Activated CD4-positive, alpha-beta T cell treated with anti-CD3 and anti-CD28 coated beads for 36 hours (primary cell): ENCODE measurements at regions of chr21 and their contacts with region 1.

Region 1: GRCh38 chr21:34630536-34631143 is 15.7 kb upstream of the RCAN1 start:
- DNase-seq: peak; percentile 31
- ATAC-seq: peak; percentile 70
- H3K4me3 Mint-ChIP-seq: no peak overlapping the region
- H3K27ac Mint-ChIP-seq: no peak overlapping the region
- H3K4me1 Mint-ChIP-seq: no peaks in the 10 kb centered on the region
- H3K27me3 Mint-ChIP-seq: peaks cover 9% of the 10 kb centered on the region

Region 2: DNA sequence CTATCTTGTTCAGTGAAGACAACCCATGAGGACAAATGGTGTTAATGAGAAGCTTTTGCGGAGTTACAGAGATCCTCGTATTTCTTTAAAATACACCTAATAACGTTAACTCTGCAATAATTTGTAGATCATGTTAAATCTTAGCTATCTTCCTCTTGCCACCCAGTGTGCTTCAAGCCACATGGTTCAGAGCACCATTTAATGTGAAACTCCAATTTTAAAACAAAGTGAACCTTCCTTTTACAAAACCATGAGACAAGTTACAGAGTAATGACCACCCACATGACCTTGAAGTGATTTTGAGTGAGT is 268.6 kb before region 1 on chr21:
- CTCF ChIA-PET with region 1: interaction called, 17 read pairs
- POLR2A ChIA-PET with region 1: no interaction called
- intact Hi-C with region 1: loop called (anchors 1 kb)
- DNase-seq: no peak
- ATAC-seq: no peak
- H3K4me3 Mint-ChIP-seq: no peak overlapping the region
- H3K27ac Mint-ChIP-seq: no peak overlapping the region
- H3K4me1 Mint-ChIP-seq: peaks cover 6% of the 10 kb centered on the region
- H3K27me3 Mint-ChIP-seq: peaks cover 8% of the 10 kb centered on the region

Region 3: GRCh38 chr21:34367321-34367935 is 263.2 kb before region 1 on chr21:
- CTCF ChIA-PET with region 1: interaction called, 17 read pairs
- POLR2A ChIA-PET with region 1: no interaction called
- intact Hi-C with region 1: loop called in 1 of 2 experiments (anchors 1 kb)
- DNase-seq: peak; percentile 61
- ATAC-seq: peak; percentile 49
- H3K4me3 Mint-ChIP-seq: no peak overlapping the region
- H3K27ac Mint-ChIP-seq: no peak overlapping the region
- H3K4me1 Mint-ChIP-seq: no peaks in the 10 kb centered on the region
- H3K27me3 Mint-ChIP-seq: peaks cover 5% of the 10 kb centered on the region

Region 4: GRCh38 chr21:34510148-34511142 is 120.2 kb before region 1 on chr21:
- CTCF ChIA-PET with region 1: interaction called, 10 read pairs
- POLR2A ChIA-PET with region 1: no interaction called
- intact Hi-C with region 1: loop called in 1 of 2 experiments (anchors 1 kb)
- DNase-seq: peak; percentile 83
- ATAC-seq: peak; percentile 93
- H3K4me3 Mint-ChIP-seq: no peak overlapping the region
- H3K27ac Mint-ChIP-seq: no peak overlapping the region
- H3K4me1 Mint-ChIP-seq: no peaks in the 10 kb centered on the region
- H3K27me3 Mint-ChIP-seq: peaks cover 1% of the 10 kb centered on the region

Region 5: DNA sequence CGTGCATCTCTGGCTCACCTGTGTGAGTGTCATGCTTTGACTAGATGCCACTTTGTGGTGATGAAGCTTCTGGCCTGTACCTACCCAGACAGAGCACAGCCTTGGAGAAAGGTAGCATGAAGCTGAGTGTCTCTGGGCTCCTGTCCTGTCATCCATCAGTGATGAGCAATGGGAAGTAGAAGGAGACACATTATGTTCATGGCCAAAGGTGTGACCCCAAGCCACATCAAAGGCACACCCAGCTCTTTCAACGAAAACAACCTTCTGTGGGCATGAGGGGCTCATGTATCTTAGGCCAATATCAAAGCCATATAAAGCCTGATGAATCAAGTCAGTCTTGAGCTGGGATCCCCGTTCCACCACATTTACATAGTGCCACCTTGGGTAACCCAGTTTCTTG is 37.1 kb after region 1 on chr21:
- CTCF ChIA-PET with region 1: interaction called, 10 read pairs
- POLR2A ChIA-PET with region 1: no interaction called
- intact Hi-C with region 1: no loop called
- DNase-seq: no peak
- ATAC-seq: no peak
- H3K4me3 Mint-ChIP-seq: no peak overlapping the region
- H3K27ac Mint-ChIP-seq: no peak overlapping the region
- H3K4me1 Mint-ChIP-seq: peaks cover 9% of the 10 kb centered on the region
- H3K27me3 Mint-ChIP-seq: peaks cover 57% of the 10 kb centered on the region